Gastrocnemius medialis (tissue), 4 donors: ENCODE measurements at regions of chr7 and their contacts with region 1.

Region 1: DNA sequence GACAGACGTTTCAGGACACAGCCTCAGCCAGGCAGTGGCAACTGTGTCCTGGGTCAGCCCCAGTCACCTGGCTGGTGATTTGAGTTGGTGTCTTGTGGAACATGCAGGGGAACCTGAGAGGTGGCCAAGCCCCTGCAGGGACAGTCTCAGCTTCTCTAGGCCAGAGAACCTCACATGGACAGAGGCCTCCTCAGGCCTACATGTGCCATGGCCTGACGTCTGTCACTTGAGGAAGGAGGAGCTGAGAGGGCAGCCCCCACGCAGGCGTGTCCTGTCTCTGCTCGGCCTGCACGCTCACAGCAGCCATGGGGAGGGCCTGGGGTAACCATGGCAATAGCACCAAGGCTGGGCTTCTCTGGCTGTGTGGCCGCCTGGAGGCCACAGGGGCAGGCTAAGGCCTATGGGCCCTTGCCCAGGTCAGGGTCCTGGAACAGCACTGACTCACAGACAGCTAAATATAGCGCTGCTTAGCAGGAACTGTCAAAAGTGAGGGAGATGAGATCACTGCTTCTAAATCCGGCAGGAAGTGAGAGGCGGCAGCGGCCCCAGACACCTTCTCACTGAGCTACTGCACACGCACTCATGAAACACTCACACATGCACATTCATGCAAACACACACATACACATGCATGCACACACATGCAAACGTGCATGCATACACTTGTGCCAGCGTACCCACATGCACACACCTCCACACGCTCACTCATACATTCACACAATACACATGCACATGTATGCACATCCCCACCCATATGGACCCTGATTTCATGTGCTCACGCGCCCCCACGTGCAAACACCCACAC is 57.0 kb downstream of the YKT6 start:
- DNase-seq: peak; percentile 78 to 91
- ATAC-seq: peak; percentile 91
- H3K4me3 ChIP-seq: no peak overlapping the region
- H3K27ac ChIP-seq: peak overlapping the region; percentile 87 to 99 (median 96)
- H3K4me1 ChIP-seq: peaks cover 59 to 61% of the 10 kb centered on the region in 2 donors
- H3K27me3 ChIP-seq: no peaks in the 10 kb centered on the region
- CTCF ChIP-seq: peak in 2 of 5 experiments; percentile 25 to 42
- POLR2A ChIP-seq: peak in 1 of 2 donors; percentile 29

Region 2: DNA sequence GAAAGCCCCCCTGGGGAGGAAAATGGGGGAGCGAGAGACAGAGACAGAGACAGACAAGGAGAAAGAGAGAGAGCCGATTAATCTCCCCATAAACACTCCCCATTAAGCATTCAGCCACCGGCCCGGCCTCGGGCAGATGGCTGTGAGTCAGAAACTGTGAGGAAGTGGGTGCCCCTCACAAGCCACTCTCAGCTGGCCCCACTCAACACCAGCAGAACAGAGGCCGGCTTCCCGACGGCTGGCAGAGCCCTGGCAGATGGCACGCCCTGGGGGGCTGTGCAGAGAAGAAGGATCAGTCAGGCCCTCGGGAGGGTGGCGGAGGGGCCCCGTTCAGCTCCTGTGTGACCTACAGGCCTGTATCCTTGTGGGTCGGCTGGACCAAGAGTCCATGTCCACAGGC is 26.4 kb after region 1 on chr7:
- in situ Hi-C with region 1: no loop called
- intact Hi-C with region 1: loop called (anchors 2 kb)
- DNase-seq: peak; percentile 0 to 12
- ATAC-seq: no peak
- H3K4me3 ChIP-seq: no peak overlapping the region
- H3K27ac ChIP-seq: peak overlapping the region; percentile 91 to 94 (median 92)
- H3K4me1 ChIP-seq: peaks cover 50 to 51% of the 10 kb centered on the region in 2 donors
- H3K27me3 ChIP-seq: no peaks in the 10 kb centered on the region
- CTCF ChIP-seq: no peak
- POLR2A ChIP-seq: no peak

Region 3: DNA sequence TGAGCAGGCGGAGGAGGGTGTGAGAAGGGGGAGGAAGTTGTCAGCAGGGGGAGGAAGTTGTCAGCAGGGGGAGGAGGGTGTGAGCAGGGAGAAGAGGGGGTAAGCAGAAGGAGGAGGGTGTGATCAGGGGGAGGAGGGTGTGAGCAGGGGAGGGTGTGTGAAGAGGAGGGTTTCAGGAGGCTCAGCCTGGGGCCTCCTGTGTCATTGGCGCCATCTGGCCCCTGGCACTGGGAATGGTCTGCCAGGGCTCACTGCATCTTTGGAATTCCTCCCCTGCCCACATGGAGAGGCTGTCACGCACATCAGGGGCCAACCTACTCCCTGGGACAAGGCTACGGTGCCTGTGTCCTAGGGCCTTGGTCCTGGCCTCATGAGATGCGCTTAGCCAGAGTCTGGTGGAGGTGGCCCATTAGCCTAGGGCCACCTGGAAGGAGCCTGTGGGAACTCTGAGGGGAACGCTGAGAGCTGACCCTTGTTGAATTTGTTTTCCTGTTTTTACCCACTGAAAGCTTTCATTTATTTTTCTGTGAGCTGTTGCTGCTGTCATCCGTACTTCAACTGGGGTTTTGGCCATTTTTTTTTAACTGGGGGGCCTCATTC is 49.6 kb after region 1 on chr7:
- in situ Hi-C with region 1: no loop called
- intact Hi-C with region 1: loop called (anchors 2 kb)
- DNase-seq: no peak
- ATAC-seq: peak; percentile 26 to 40
- H3K4me3 ChIP-seq: no peak overlapping the region
- H3K27ac ChIP-seq: peak overlapping the region; percentile 1 to 83 (median 41)
- H3K4me1 ChIP-seq: peaks cover 20 to 36% of the 10 kb centered on the region in 2 donors
- H3K27me3 ChIP-seq: no peaks in the 10 kb centered on the region
- CTCF ChIP-seq: no peak
- POLR2A ChIP-seq: no peak